GM10248 (cell line): ENCODE measurements at regions of chr6 and their contacts with region 1.

Region 1: DNA sequence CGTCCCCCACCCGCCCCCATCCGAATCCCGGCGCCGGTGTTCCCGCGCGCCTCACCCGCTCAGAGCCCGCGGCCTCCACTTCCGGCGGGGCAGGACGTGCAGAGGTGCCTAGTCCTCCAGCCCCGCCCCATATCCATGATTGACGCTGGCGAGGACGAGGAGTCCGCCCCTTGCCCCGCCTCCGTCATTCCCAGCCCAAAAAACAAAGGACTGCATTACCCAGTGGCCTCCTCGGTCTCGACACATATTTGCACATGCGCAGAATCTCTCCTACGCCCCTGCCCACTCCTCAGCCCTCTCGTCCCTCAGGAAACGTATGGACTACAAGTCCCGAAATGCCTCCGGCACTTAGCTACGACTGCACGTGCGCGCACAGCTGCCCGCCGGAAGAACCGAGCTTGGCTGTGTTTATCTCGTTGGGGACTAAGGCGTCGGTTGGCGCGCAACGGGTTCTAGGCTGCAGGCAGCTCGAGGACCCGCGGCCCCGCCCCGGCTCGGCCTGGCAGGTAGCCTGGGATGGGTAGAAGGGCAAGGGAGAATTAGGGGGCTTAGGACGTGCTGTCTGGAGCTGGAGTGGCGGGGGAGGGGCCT is at the starts of genes KLHDC3 and MEA1:
- DNase-seq: peak; percentile 100
- CTCF ChIP-seq: no peak

Region 2: DNA sequence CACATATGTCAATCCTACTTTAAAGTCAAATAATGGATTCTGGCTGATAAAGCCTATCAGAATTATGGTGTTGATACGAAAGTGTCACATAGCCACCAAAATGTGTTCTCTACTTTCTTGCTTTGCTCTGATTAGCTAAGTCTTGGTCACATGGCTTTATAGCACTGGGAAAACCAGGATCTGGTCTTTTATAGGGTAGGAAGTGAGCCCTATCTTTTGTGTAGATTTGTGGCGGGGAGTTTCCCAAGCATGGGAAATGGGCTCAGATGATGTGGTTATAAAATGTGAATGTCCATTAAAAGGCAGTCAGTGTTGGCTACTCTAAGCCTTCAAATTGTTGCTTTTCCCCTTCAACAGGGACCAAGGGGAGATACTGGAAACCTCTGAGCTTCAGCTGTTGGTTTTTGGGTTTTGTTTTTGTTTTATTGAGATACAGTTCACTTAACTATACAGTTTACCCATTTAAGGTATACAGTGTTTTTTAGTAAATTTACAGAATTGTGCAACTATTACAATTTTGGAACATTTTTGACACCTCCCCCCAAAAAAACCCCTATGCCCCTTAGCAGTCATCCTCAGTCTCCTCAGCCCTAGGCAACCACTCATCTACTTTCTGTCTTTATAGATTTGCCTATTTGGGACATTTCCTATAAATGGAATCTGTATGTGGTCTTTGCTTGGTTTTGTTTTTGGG is 19.7 kb after region 1 on chr6:
- CTCF ChIA-PET with region 1: no interaction called
- POLR2A ChIA-PET with region 1: interaction called, 10 read pairs
- DNase-seq: no peak
- CTCF ChIP-seq: no peak

Region 3: GRCh38 chr6:43290905-43291355 is 277.0 kb after region 1 on chr6:
- CTCF ChIA-PET with region 1: no interaction called
- POLR2A ChIA-PET with region 1: no interaction called
- DNase-seq: no peak
- CTCF ChIP-seq: no peak

Region 4: GRCh38 chr6:43427406-43428111 is 413.6 kb after region 1 on chr6 and contains the start of gene ABCC10:
- CTCF ChIA-PET with region 1: no interaction called
- POLR2A ChIA-PET with region 1: no interaction called
- DNase-seq: peak; percentile 96
- CTCF ChIP-seq: peak; percentile 25